Panc1 (cell line): ENCODE measurements at regions of chr17 and their contacts with region 1.

Region 1: GRCh38 chr17:46154151-46154816 is 38.9 kb downstream of the KANSL1 start:
- DNase-seq: no peak
- ATAC-seq: no peak
- H3K4me3 ChIP-seq: no peak overlapping the region
- H3K27ac ChIP-seq: no peak overlapping the region
- H3K4me1 ChIP-seq: peaks cover 53% of the 10 kb centered on the region
- H3K27me3 ChIP-seq: no peaks in the 10 kb centered on the region
- CTCF ChIP-seq: no peak

Region 2: GRCh38 chr17:45852535-45853297 is 301.6 kb before region 1 on chr17:
- CTCF ChIA-PET with region 1: no interaction called
- POLR2A ChIA-PET with region 1: no interaction called
- in situ Hi-C with region 1: no loop called
- intact Hi-C with region 1: no loop called
- DNase-seq: peak; percentile 13
- ATAC-seq: peak; percentile 60; the same call in 1 of the 2 replicates
- H3K4me3 ChIP-seq: no peak overlapping the region
- H3K27ac ChIP-seq: no peak overlapping the region
- H3K4me1 ChIP-seq: no peaks in the 10 kb centered on the region
- H3K27me3 ChIP-seq: no peaks in the 10 kb centered on the region
- CTCF ChIP-seq: peak; percentile 84

Region 3: DNA sequence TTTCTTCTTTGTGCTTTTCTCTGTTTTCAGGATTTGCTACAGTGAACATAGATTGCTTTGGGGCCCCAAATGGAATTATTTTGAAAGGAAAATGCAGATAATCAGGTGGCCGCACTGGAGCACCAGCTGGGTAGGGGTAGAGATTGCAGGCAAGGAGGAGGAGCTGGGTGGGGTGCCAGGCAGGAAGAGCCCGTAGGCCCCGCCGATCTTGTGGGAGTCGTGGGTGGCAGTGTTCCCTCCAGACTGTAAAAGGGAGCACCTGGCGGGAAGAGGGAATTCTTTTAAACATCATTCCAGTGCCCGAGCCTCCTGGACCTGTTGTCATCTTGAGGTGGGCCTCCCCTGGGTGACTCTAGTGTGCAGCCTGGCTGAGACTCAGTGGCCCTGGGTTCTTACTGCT is 154.0 kb before region 1 on chr17:
- CTCF ChIA-PET with region 1: no interaction called
- POLR2A ChIA-PET with region 1: interaction called, 12 read pairs
- in situ Hi-C with region 1: no loop called
- intact Hi-C with region 1: no loop called
- DNase-seq: no peak
- ATAC-seq: no peak
- H3K4me3 ChIP-seq: no peak overlapping the region
- H3K27ac ChIP-seq: no peak overlapping the region
- H3K4me1 ChIP-seq: no peaks in the 10 kb centered on the region
- H3K27me3 ChIP-seq: no peaks in the 10 kb centered on the region
- CTCF ChIP-seq: no peak

Region 4: GRCh38 chr17:46166692-46167249 is 12.5 kb after region 1 on chr17:
- CTCF ChIA-PET with region 1: interaction called, 10 read pairs
- POLR2A ChIA-PET with region 1: no interaction called
- in situ Hi-C with region 1: no loop called
- intact Hi-C with region 1: no loop called
- DNase-seq: no peak
- ATAC-seq: no peak
- H3K4me3 ChIP-seq: no peak overlapping the region
- H3K27ac ChIP-seq: no peak overlapping the region
- H3K4me1 ChIP-seq: peaks cover 30% of the 10 kb centered on the region
- H3K27me3 ChIP-seq: no peaks in the 10 kb centered on the region
- CTCF ChIP-seq: no peak

Region 5: GRCh38 chr17:46726206-46726605 is 571.9 kb after region 1 on chr17:
- CTCF ChIA-PET with region 1: no interaction called
- POLR2A ChIA-PET with region 1: no interaction called
- in situ Hi-C with region 1: no loop called
- intact Hi-C with region 1: no loop called
- DNase-seq: no peak
- ATAC-seq: no peak
- H3K4me3 ChIP-seq: no peak overlapping the region
- H3K27ac ChIP-seq: no peak overlapping the region
- H3K4me1 ChIP-seq: no peaks in the 10 kb centered on the region
- H3K27me3 ChIP-seq: no peaks in the 10 kb centered on the region
- CTCF ChIP-seq: no peak